ENCODE measurements at regions of chr19 and their contacts with region 1.

Region 1: DNA sequence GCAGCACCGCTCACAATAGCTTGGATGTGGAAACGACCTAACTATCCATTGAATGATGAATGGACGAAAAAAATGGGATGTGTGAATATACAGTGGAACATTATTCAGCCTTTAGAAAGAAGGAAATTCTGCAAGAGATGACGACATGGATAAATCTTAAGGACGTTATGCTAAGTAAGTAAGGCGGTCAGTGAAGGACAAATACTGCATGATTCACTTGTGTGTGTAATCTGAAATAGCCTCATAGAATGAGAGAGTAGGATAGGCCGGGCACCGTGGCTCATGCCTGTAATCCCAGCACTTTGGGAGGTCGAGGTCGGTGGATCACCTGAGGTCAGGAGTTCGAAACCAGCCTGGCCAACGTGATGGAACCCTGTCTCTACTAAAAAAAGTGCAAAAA is 25.4 kb upstream of the ZNF766 start:
- DNase-seq: no peak
- H3K4me3 ChIP-seq: no peak overlapping the region
- H3K27ac ChIP-seq: no peak overlapping the region
- H3K4me1 ChIP-seq: no peaks in the 10 kb centered on the region
- H3K27me3 ChIP-seq: no peaks in the 10 kb centered on the region
- CTCF ChIP-seq: no peak
- POLR2A ChIP-seq: no peak

Region 2: GRCh38 chr19:52139252-52140031 is 104.6 kb before region 1 on chr19 and contains the start of gene ZNF616:
- intact Hi-C with region 1: loop called (anchors 5 kb)
- DNase-seq: peak; percentile 97 to 98
- H3K4me3 ChIP-seq: peak within 1 kb of the TSS; percentile 90 to 98
- H3K27ac ChIP-seq: peak within 1 kb of the TSS; percentile 97 to 98
- H3K4me1 ChIP-seq: peaks cover 0 to 11% of the 10 kb centered on the region in 2 donors
- H3K27me3 ChIP-seq: no peaks in the 10 kb centered on the region
- CTCF ChIP-seq: peak; percentile 78 to 86 (median 79)
- POLR2A ChIP-seq: peak; percentile 51 to 75
- total RNA-seq, gene ZNF616: 2.4 to 27.2 (median 17.6) TPM

Measured in uterus (tissue), 4 donors.